Panc1 (cell line): ENCODE measurements at regions of chr2 and their contacts with region 1.

Region 1: GRCh38 chr2:172964511-172965139 is 111.0 kb upstream of the MAP3K20 start:
- DNase-seq: no peak
- ATAC-seq: no peak
- H3K4me3 ChIP-seq: no peak overlapping the region
- H3K27ac ChIP-seq: no peak overlapping the region
- H3K4me1 ChIP-seq: peaks cover 15% of the 10 kb centered on the region
- H3K27me3 ChIP-seq: no peaks in the 10 kb centered on the region
- CTCF ChIP-seq: no peak

Region 2: DNA sequence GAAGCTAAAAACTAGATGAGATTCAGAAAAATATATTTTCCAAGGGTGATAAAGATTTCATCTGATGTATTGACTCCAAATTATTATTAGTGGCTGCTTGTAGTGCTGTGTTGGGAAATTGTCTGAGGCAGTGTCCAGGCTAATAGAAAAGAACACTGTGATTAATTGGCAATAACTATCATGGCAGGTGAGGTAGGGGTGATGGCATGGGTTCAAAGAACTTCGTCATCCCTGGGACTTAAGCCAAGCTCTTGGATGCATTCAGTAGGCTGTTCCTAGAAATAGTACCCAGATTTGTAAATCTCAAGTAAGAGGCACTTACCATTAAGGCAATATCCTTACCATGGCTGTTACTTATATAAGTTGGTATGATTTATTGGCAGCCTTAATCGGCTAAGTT is 242.1 kb before region 1 on chr2:
- CTCF ChIA-PET with region 1: no interaction called
- POLR2A ChIA-PET with region 1: interaction called, 11 read pairs
- in situ Hi-C with region 1: no loop called
- intact Hi-C with region 1: no loop called
- DNase-seq: no peak
- ATAC-seq: no peak
- H3K4me3 ChIP-seq: no peak overlapping the region
- H3K27ac ChIP-seq: no peak overlapping the region
- H3K4me1 ChIP-seq: no peaks in the 10 kb centered on the region
- H3K27me3 ChIP-seq: 0 out of 2 replicates have a peak, but pooled peaks cover 4% of the 10 kb centered on the region
- CTCF ChIP-seq: no peak

Region 3: DNA sequence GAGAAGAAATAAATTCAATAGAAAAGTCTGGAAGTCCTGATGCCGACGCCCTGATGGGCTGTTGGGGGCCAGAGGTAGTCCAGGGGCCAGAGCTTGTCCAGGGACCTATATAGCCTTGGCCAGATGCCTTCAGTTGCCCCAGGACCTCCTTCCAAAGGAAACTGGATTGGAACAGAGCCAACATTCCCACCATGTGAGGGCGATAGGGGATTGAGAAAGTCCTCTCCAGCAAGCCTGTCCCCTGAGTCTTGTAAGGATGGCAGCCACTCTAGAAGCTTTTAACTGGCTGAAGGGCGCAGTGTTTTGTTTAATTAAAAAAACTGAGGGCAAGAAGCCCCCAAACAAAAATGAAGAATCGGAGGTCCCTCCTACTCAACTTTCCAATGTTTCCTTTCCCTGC is 335.1 kb after region 1 on chr2:
- CTCF ChIA-PET with region 1: interaction called, 13 read pairs
- POLR2A ChIA-PET with region 1: no interaction called
- in situ Hi-C with region 1: no loop called
- intact Hi-C with region 1: no loop called
- DNase-seq: no peak
- ATAC-seq: no peak
- H3K4me3 ChIP-seq: no peak overlapping the region
- H3K27ac ChIP-seq: no peak overlapping the region
- H3K4me1 ChIP-seq: no peaks in the 10 kb centered on the region
- H3K27me3 ChIP-seq: no peaks in the 10 kb centered on the region
- CTCF ChIP-seq: no peak